Dorsolateral prefrontal cortex (tissue), 120 donors: ENCODE measurements at regions of chr17 and their contacts with region 1.

Region 1: DNA sequence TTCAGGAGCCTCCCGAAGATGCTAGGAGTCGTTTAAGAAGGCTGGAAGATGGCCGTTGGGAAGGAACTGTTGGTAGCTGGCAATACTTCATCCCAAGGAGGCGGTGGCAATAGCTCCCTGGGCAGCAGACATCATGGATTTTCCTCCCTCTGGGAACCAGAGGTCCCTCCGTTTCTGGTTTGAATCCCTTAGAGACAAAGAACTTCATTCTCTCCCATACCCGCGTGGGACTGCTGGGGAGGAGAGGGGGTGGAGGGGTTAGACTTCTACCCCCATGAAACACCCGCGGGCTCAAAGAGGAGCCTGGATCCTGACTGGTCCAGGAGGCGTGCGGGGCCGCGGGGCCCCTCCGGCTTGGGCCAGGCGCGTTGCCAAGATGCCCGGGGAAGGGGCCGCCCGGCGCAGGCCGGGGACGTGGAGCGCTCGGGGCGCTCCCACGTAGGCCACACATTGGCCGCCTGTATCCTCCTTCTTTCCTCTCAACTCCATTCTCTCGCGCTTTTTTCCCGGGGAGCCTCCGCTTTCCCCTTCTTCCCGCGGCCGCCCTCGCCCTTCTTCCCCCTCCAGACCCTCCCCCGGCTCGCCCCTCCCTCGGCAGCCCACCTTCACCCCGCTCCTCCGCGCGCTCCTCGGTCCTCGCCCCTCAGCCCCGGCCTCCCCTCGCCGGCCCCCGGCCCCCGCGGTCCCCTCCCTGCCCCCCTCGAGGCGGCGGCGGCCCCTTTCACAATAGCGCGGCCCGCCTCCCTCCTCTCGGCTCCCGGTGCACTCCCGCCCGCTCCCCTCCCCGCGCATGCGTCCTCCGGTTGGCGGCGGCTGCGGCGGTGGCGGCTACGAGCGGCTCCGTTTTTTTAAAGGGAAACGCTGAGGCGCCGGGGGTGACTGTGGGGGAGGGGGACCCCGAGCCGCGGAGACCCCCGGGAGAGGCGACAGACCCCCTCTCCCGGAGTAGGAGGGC is at the start of gene MSL1:
- DNase-seq: peak; percentile 74 to 92 (median 86)
- H3K4me3 ChIP-seq: peak within 1 kb of the TSS; percentile 73 to 100 (median 96)
- H3K27ac ChIP-seq: peak within 1 kb of the TSS; percentile 96 to 100 (median 99)
- H3K27me3 ChIP-seq: no peaks in the 10 kb centered on the region
- CTCF ChIP-seq: peak in 3 of 56 donors; percentile 2 to 21 (median 3)
- total RNA-seq, gene MSL1: 87.8 to 143 (median 120) TPM

Region 2: DNA sequence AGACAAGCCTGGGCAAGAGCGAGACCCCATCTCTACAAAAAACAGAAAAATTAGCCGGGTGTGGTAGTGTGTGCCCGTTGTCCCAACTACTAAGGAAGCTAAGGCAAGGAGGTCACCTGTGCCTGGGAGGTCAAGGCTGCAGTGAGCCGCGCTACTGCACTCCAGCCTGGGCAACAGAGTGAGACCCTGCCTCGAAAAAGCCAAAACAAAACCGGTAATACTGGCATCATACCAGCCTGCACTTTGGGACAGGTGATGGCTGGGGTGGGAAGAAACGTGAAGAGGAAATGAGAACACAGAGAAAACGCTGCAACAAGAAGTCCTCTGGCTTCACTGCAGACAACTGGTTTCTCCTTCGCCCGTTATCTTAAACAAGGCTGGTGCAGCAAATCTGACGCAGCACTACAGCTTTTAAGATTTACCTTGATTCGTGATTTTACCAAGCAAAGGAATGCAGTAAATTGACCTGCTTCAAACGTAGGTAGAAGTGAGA is 18.2 kb after region 1 on chr17:
- intact Hi-C with region 1: loop called (anchors 1 to 2 kb)
- DNase-seq: peak in 1 of 10 donors; percentile 16
- H3K4me3 ChIP-seq: peak overlapping the region; percentile 43 to 93 (median 78)
- H3K27ac ChIP-seq: peak overlapping the region; percentile 91 to 100 (median 98)
- H3K27me3 ChIP-seq: no peaks in the 10 kb centered on the region
- CTCF ChIP-seq: peak in 2 of 56 donors; percentile 19 to 22